Activated CD4-positive, alpha-beta T cell treated with anti-CD3 and anti-CD28 coated beads for 36 hours (primary cell): ENCODE measurements at regions of chr16 and their contacts with region 1.

Region 1: GRCh38 chr16:85610508-85611332 is 2.4 kb upstream of the GSE1 start:
- DNase-seq: peak; percentile 94
- ATAC-seq: peak; percentile 72
- H3K4me3 Mint-ChIP-seq: peak overlapping the region; percentile 59
- H3K27ac Mint-ChIP-seq: no peak overlapping the region
- H3K4me1 Mint-ChIP-seq: peaks cover 27% of the 10 kb centered on the region
- H3K27me3 Mint-ChIP-seq: peaks cover 9% of the 10 kb centered on the region

Region 2: GRCh38 chr16:85275533-85276249 is 335.0 kb before region 1 on chr16:
- CTCF ChIA-PET with region 1: interaction called, 3 read pairs
- POLR2A ChIA-PET with region 1: no interaction called
- intact Hi-C with region 1: loop called in 1 of 2 experiments (anchors 1 kb)
- DNase-seq: peak; percentile 85
- ATAC-seq: peak; percentile 78
- H3K4me3 Mint-ChIP-seq: no peak overlapping the region
- H3K27ac Mint-ChIP-seq: no peak overlapping the region
- H3K4me1 Mint-ChIP-seq: no peaks in the 10 kb centered on the region
- H3K27me3 Mint-ChIP-seq: peaks cover 1% of the 10 kb centered on the region

Region 3: GRCh38 chr16:85393674-85394483 is 216.8 kb before region 1 on chr16:
- CTCF ChIA-PET with region 1: interaction called, 9 read pairs
- POLR2A ChIA-PET with region 1: no interaction called
- intact Hi-C with region 1: loop called in 1 of 2 experiments (anchors 1 kb)
- DNase-seq: peak; percentile 83
- ATAC-seq: peak; percentile 73
- H3K4me3 Mint-ChIP-seq: no peak overlapping the region
- H3K27ac Mint-ChIP-seq: no peak overlapping the region
- H3K4me1 Mint-ChIP-seq: no peaks in the 10 kb centered on the region
- H3K27me3 Mint-ChIP-seq: no peaks in the 10 kb centered on the region

Region 4: GRCh38 chr16:85479972-85480751 is 130.6 kb before region 1 on chr16:
- CTCF ChIA-PET with region 1: interaction called, 4 read pairs
- POLR2A ChIA-PET with region 1: no interaction called
- intact Hi-C with region 1: loop called in 1 of 2 experiments (anchors 1 kb)
- DNase-seq: peak; percentile 31
- ATAC-seq: no peak
- H3K4me3 Mint-ChIP-seq: no peak overlapping the region
- H3K27ac Mint-ChIP-seq: no peak overlapping the region
- H3K4me1 Mint-ChIP-seq: no peaks in the 10 kb centered on the region
- H3K27me3 Mint-ChIP-seq: no peaks in the 10 kb centered on the region

Region 5: DNA sequence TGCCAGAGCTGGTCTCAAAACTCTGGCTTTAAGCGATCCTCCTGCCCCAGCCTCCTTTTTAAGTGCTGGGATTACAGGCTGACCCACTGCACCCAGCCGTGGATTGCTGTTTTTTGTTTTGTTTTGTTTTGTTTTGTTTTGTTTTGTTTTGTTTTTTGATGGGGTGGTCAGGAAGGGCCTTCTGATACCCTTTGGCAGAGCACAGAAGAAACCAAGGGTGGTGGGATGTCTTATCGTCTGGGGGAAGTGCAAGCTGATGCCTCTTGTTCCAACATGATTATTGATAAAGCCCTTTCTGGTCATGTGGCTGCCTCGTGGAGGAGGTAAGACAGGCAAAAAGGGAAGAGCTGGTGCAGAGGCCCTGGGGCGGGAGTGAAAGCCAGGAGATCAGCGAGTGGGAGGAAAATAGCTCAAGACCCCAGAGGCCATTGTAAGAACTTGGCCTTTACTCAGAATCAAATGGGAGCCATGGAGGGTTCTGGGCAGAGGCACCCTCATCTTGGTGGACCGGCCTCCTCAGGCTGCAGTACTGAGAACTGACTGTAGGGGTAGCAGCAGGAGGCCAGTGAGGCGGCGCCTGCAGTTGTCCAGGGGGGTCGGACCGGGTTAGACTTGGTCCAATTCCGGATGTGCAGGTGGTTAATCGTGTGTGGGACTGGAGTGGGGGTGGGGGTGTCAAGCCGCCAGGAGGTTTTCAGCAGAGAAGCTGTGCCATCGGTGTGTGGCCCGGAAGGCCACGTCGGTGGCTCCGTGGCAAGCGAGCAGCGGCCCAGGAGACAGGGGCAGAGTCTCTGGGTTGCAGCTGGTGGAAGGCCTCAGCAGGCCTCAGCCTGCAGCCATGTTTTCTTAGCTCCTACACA is 82.0 kb before region 1 on chr16:
- CTCF ChIA-PET with region 1: interaction called, 7 read pairs
- POLR2A ChIA-PET with region 1: no interaction called
- intact Hi-C with region 1: loop called in 1 of 2 experiments (anchors 1 kb)
- DNase-seq: peak; percentile 55
- ATAC-seq: peak; percentile 63
- H3K4me3 Mint-ChIP-seq: no peak overlapping the region
- H3K27ac Mint-ChIP-seq: no peak overlapping the region
- H3K4me1 Mint-ChIP-seq: no peaks in the 10 kb centered on the region
- H3K27me3 Mint-ChIP-seq: no peaks in the 10 kb centered on the region

Region 6: DNA sequence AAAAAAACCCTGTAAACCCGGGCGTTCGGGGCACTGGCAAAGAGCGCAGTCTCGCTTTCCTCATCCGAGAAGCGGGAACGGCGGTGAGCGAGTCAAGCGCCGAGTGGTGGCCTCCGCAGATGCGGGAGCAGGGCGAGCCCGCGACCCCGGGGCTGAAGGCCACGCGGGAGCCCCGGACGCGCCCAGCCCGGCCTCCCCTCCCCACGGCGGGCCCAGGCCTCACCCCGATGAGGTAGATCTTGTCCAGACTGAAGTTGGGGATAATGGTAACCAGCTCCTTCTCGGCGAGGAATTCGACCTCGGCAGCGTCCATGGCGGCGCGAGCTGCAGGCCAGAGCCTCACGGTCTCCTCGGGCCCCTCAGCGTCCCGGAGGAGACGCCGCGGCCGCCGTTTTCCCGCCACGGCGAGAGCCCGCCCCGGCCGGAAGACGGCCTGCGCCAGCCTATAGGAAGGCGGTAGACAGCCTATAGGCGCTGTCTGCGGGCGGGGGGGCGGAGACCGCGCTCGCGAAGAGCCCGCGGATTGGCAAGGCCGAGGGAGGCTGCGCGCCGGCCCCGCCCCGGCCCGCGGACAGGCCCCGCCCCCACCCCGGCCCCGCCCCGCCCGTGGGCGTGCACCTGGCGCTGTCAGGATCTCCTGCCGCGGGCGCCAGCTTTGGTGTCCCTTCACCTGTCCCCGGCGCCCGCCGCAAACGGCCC is 78.0 kb after region 1 on chr16 and contains the start of gene GINS2:
- CTCF ChIA-PET with region 1: interaction called, 8 read pairs
- POLR2A ChIA-PET with region 1: no interaction called
- intact Hi-C with region 1: loop called in 1 of 2 experiments (anchors 1 kb)
- DNase-seq: peak; percentile 96
- ATAC-seq: peak; percentile 100
- H3K4me3 Mint-ChIP-seq: peak within 1 kb of the TSS; percentile 88
- H3K27ac Mint-ChIP-seq: peak within 1 kb of the TSS; percentile 93
- H3K4me1 Mint-ChIP-seq: peaks cover 18% of the 10 kb centered on the region
- H3K27me3 Mint-ChIP-seq: peaks cover 4% of the 10 kb centered on the region
- total RNA-seq, gene GINS2: 86.4 to 87.5 TPM